Head of caudate nucleus (tissue), 42 donors: ENCODE measurements at regions of chr3 and their contacts with region 1.

Region 1: GRCh38 chr3:33440323-33441232 is at the start of gene UBP1:
- DNase-seq: peak; percentile 97 to 100 (median 99)

Region 2: GRCh38 chr3:32667122-32667521 is 773.5 kb before region 1 on chr3:
- intact Hi-C with region 1: no loop called
- DNase-seq: no peak

Region 3: GRCh38 chr3:33131331-33132018 is 309.1 kb before region 1 on chr3:
- intact Hi-C with region 1: loop called (anchors 10 kb)
- DNase-seq: peak in 30 of 42 donors; percentile 30 to 84 (median 62)

Region 4: GRCh38 chr3:33658991-33659848 is 218.6 kb after region 1 on chr3:
- intact Hi-C with region 1: loop called (anchors 5 kb)
- DNase-seq: peak; percentile 82 to 97 (median 93)

Region 5: DNA sequence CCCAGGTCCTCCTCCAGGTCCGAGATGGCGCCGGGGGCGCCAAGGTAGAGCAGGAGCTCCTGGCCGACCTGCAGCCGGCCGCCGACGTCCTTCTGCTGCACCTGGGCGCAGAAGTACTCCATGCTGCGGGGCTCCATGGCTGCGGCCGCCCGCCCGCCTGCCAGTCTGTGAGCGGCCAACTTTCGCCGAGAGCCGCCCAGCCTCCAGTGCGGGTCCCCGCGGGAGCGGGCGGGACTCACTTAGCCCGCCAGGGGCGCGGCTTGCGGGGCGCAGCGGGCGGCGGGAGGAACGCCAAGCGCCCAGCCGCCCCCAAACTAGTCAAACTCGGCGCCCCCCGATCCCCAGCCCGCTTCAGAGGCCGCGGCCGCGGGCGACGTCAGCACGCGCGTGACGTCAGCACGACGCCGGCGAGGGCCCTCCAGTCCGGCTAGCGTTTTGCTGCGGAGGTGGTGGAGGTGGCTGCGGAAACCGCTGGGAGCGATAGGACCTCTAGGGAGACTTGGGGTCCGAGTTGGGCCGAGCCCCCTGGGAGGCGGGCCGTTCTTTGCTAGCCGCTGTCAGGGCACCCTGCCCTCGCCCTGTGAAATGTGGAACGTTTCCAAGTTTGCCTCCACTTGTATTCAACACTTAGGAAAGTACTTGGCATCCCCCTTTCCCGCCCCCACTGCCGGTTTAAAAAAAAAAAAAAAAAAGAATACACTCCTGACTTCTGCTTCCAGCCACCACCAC is 277.5 kb after region 1 on chr3 and contains the start of gene CLASP2:
- intact Hi-C with region 1: loop called (anchors 5 kb)
- DNase-seq: peak; percentile 52 to 92 (median 84)

Region 6: GRCh38 chr3:33798411-33799201 is 358.0 kb after region 1 on chr3 and contains the start of gene PDCD6IP:
- intact Hi-C with region 1: loop called (anchors 5 kb)
- DNase-seq: peak; percentile 84 to 97 (median 93)